ENCODE measurements at regions of chr6 and their contacts with region 1.

Region 1: DNA sequence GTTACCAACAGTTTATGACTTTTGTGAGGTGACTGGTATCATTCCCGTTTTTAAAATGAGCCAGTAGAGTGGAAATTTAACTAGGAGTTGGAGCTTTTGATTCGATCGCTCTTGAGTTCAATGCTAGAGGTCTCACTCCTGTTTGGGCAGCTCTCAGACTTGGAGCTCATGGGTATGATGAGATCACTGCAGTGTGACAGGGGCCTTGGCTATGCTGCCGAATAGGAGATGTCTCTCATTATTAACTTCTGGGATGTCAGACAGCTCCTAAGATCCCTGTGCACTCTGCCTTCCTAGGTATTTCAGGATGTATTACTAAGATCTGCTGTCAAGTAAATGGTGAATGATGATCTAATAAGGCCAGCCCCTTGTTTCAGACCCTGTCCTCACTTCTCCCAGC is 20.4 kb downstream of the AKAP12 start:
- DNase-seq: no peak
- H3K4me3 ChIP-seq: no peak overlapping the region
- H3K27ac ChIP-seq: peak overlapping the region in 1 of 4 donors; percentile 35
- H3K4me1 ChIP-seq: peaks cover 0 to 40% (median 8%) of the 10 kb centered on the region in 4 donors
- H3K27me3 ChIP-seq: no peaks in the 10 kb centered on the region
- CTCF ChIP-seq: no peak
- EP300 ChIP-seq: no peak
- POLR2A ChIP-seq: no peak

Region 2: GRCh38 chr6:151294561-151295101 is 34.4 kb after region 1 on chr6:
- in situ Hi-C with region 1: no loop called
- intact Hi-C with region 1: loop called (anchors 1 kb)
- DNase-seq: no peak
- H3K4me3 ChIP-seq: no peak overlapping the region
- H3K27ac ChIP-seq: peak overlapping the region; percentile 78 to 89 (median 84)
- H3K4me1 ChIP-seq: peaks cover 12 to 51% (median 14%) of the 10 kb centered on the region in 4 donors
- H3K27me3 ChIP-seq: no peaks in the 10 kb centered on the region
- CTCF ChIP-seq: no peak
- EP300 ChIP-seq: no peak
- POLR2A ChIP-seq: no peak